ENCODE measurements at regions of chr17 and their contacts with region 1.

Region 1: DNA sequence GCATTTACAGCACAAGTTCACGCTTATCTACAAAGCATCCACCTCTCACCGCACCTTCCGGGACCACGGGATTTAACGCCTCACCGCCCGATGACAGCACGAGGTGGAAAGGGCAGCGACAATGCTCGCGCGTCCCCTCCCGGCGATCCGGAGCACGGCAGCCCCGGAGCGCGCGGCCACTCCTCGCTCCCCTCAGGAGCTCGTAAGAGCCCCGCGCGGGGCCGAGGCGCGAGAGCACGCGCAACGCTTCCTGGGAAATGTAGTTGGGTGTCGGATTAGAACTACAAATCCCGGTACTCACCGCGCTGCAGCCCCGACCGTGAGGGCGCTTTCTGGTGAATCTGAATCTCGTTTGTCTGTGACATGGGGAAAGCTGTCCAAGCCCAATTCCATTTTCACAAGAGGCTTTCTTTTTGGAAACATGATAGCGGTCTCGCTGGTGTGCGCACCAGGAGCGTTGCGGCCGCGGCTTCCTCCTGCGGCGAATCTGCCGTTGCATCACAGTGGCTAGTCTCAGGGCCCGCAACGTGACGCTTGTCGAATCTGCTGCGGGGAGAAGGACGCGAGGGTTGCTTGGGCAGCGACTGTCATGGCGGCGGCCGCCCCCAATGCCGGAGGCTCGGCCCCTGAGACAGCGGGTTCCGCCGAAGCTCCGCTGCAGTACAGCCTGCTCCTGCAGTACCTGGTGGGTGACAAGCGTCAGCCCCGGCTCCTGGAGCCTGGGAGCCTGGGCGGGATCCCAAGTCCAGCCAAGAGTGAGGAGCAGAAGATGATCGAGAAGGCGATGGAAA is at the start of gene TIMM22:
- DNase-seq: peak; percentile 98
- H3K4me3 ChIP-seq: peak within 1 kb of the TSS; percentile 77 to 97 (median 86)
- H3K27ac ChIP-seq: peak within 1 kb of the TSS; percentile 86
- H3K4me1 ChIP-seq: peaks cover 29% of the 10 kb centered on the region
- H3K27me3 ChIP-seq: no peaks in the 10 kb centered on the region
- CTCF ChIP-seq: peak; percentile 94 to 97
- POLR2A ChIP-seq: peak; percentile 81
- total RNA-seq, gene TIMM22: 19.5 and 19.6 TPM in 2 replicates

Region 2: DNA sequence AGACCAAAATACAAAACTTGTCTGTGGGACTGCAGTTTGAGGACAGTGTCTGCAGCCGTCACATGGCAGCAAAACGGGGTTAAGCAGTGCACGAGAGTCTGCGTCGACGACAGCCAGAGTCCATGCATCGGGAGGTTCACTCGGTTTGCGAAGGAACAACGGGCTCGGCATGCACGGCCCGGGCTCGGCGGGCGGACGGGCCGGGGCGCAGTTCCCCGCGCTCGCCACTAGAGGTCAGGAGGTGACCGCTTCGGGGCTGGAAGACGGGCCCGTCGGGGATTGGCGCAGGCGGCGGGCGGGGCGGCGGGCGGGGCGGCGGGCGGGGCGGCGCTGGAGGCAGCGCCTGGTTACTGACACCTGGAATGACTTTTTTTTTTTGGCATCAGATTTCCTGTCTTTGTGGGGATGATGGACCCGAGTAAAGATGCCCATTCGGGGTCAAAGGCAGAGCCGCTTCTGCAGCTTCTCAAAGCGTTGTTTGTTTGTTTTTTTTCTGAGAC is 852.9 kb before region 1 on chr17:
- CTCF ChIA-PET with region 1: no interaction called
- POLR2A ChIA-PET with region 1: no interaction called
- dilution Hi-C with region 1: no loop called
- intact Hi-C with region 1: loop called (anchors 5 kb)
- DNase-seq: peak; percentile 73
- H3K4me3 ChIP-seq: no peak overlapping the region
- H3K27ac ChIP-seq: no peak overlapping the region
- H3K4me1 ChIP-seq: no peaks in the 10 kb centered on the region
- H3K27me3 ChIP-seq: no peaks in the 10 kb centered on the region
- CTCF ChIP-seq: peak; percentile 73 to 87
- POLR2A ChIP-seq: no peak

Region 3: GRCh38 chr17:716238-716637 is 280.5 kb before region 1 on chr17:
- CTCF ChIA-PET with region 1: interaction called, 6 read pairs
- POLR2A ChIA-PET with region 1: no interaction called
- dilution Hi-C with region 1: no loop called
- intact Hi-C with region 1: loop called (anchors 1 kb)
- DNase-seq: no peak
- H3K4me3 ChIP-seq: no peak overlapping the region
- H3K27ac ChIP-seq: no peak overlapping the region
- H3K4me1 ChIP-seq: peaks cover 19% of the 10 kb centered on the region
- H3K27me3 ChIP-seq: no peaks in the 10 kb centered on the region
- CTCF ChIP-seq: no peak
- POLR2A ChIP-seq: no peak

Region 4: GRCh38 chr17:781805-782731 is 214.7 kb before region 1 on chr17 and contains the starts of genes GLOD4 and MRM3:
- CTCF ChIA-PET with region 1: interaction called, 20 read pairs
- POLR2A ChIA-PET with region 1: no interaction called
- dilution Hi-C with region 1: loop called (anchors 25 kb)
- intact Hi-C with region 1: loop called (anchors 1 kb)
- DNase-seq: peak; percentile 92
- H3K4me3 ChIP-seq: peak within 1 kb of the TSS; percentile 66 to 91 (median 83)
- H3K27ac ChIP-seq: peak within 1 kb of the TSS; percentile 29
- H3K4me1 ChIP-seq: peaks cover 18% of the 10 kb centered on the region
- H3K27me3 ChIP-seq: no peaks in the 10 kb centered on the region
- CTCF ChIP-seq: no peak
- POLR2A ChIP-seq: peak; percentile 92
- total RNA-seq, gene GLOD4: 81.8 and 84.2 TPM in 2 replicates
- total RNA-seq, gene MRM3: 19.0 and 19.2 TPM in 2 replicates

Region 5: GRCh38 chr17:794876-795275 is 201.9 kb before region 1 on chr17:
- CTCF ChIA-PET with region 1: interaction called, 29 read pairs
- POLR2A ChIA-PET with region 1: no interaction called
- dilution Hi-C with region 1: loop called (anchors 25 kb)
- intact Hi-C with region 1: loop called (anchors 1 kb)
- DNase-seq: peak; percentile 85
- H3K4me3 ChIP-seq: peak overlapping the region in 2 of 3 experiments; percentile 12 to 24
- H3K27ac ChIP-seq: no peak overlapping the region
- H3K4me1 ChIP-seq: peaks cover 10% of the 10 kb centered on the region
- H3K27me3 ChIP-seq: no peaks in the 10 kb centered on the region
- CTCF ChIP-seq: peak; percentile 79 to 94
- POLR2A ChIP-seq: no peak

Region 6: GRCh38 chr17:916315-916714 is 80.4 kb before region 1 on chr17:
- CTCF ChIA-PET with region 1: no interaction called
- POLR2A ChIA-PET with region 1: no interaction called
- dilution Hi-C with region 1: no loop called
- intact Hi-C with region 1: no loop called
- DNase-seq: no peak
- H3K4me3 ChIP-seq: no peak overlapping the region
- H3K27ac ChIP-seq: peak overlapping the region; percentile 79
- H3K4me1 ChIP-seq: peaks cover 26% of the 10 kb centered on the region
- H3K27me3 ChIP-seq: no peaks in the 10 kb centered on the region
- CTCF ChIP-seq: peak; percentile 10 to 20
- POLR2A ChIP-seq: no peak

Region 7: DNA sequence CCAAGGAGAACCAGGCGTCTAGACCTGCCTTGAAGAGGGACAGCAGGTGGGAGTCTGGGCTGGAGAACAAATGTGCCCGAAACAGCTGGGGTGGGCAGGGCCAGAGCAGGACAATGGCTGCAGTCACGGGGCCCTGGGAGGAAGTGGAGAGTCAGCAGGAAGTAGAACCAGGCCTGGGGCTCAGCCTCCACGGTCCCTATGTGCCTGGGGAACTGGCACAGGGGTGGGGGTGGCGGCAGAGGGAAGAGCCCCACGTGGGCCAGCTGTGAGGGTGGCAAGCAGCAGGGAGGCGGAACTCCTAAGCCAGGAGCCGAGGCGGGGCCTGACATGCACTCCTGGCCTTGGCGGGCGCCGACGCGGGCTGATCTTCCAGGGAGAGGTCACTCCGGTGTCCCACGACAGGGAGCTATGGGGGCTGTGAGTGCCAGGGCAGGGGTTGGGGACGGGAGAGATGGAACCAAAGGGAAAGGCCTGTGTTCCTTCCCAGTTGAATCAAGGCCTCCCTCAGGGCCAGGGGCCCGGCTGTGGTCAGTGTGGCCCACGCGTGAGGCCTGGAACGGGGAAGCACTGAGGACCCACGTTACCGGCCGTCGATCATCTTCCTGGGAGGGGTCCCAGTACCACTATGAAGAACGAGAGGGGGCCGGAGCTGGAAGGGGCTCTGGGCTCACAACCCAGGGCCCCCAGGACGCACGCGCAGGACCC is 42.9 kb after region 1 on chr17:
- CTCF ChIA-PET with region 1: interaction called, 19 read pairs
- POLR2A ChIA-PET with region 1: interaction called, 4 read pairs
- dilution Hi-C with region 1: no loop called
- intact Hi-C with region 1: no loop called
- DNase-seq: peak; percentile 84
- H3K4me3 ChIP-seq: no peak overlapping the region
- H3K27ac ChIP-seq: peak overlapping the region; percentile 80
- H3K4me1 ChIP-seq: peaks cover 30% of the 10 kb centered on the region
- H3K27me3 ChIP-seq: no peaks in the 10 kb centered on the region
- CTCF ChIP-seq: no peak
- POLR2A ChIP-seq: no peak

Measured in endothelial cell of umbilical vein (primary cell).